Posterior vena cava (tissue), 2 donors: ENCODE measurements at regions of chr4 and their contacts with region 1.

Region 1: DNA sequence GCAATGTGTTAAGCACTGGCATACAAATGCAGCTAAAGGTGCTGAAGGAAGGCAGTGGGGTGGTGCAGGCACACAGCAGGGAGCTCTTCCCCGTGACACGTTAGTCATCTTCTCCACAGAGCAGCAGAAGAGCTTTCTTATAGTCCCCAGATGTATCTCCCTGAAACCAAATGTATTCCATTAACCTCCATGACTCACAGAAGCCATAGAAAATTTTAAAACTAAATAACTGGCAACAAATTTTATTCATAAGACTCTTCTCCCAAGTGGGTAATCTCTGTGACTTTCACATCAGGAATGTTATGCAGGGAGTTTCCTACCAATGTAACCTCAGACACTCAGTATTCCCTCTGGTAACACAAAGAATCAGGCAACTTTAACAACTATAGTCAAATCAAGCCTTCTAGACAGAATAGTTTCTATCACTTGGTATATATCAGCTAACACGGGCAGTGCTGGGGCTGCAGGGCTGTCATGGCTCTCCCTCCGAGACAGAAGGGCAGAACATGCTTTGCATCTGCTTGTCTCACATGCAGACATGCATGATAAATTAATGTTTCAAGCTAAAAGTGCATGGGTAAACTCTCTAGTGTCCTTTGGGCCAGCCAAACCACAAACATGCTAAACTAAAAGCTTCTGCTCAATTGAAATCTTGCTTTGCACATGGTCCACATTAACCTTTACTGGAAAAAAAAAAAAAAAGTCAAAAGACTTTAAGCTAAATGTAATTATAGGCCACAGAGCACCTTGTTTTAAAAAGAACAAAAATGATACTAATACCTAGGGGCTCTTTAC is 28.2 kb downstream of the ANXA5 start:
- DNase-seq: no peak

Region 2: GRCh38 chr4:121693450-121693849 is 24.9 kb after region 1 on chr4:
- intact Hi-C with region 1: loop called in 1 of 2 experiments (anchors 1 kb)
- DNase-seq: no peak